ENCODE measurements at regions of chr12 and their contacts with region 1.

Region 1: GRCh38 chr12:12356886-12357718 is at the start of gene BORCS5:
- DNase-seq: peak; percentile 96 to 99 (median 98)
- ATAC-seq: peak; percentile 85
- H3K4me3 ChIP-seq: peak within 1 kb of the TSS; percentile 87
- H3K4me3 Mint-ChIP-seq: peak within 1 kb of the TSS; percentile 94
- H3K27ac ChIP-seq: peak within 1 kb of the TSS; percentile 86 to 93
- H3K27ac Mint-ChIP-seq: peak within 1 kb of the TSS; percentile 97
- H3K4me1 ChIP-seq: peaks cover 41% of the 10 kb centered on the region
- H3K4me1 Mint-ChIP-seq: peaks cover 64% of the 10 kb centered on the region
- H3K27me3 ChIP-seq: no peaks in the 10 kb centered on the region
- H3K27me3 Mint-ChIP-seq: no peaks in the 10 kb centered on the region
- CTCF ChIP-seq: peak; percentile 30
- total RNA-seq, gene BORCS5: 36.4 to 39.3 TPM

Region 2: DNA sequence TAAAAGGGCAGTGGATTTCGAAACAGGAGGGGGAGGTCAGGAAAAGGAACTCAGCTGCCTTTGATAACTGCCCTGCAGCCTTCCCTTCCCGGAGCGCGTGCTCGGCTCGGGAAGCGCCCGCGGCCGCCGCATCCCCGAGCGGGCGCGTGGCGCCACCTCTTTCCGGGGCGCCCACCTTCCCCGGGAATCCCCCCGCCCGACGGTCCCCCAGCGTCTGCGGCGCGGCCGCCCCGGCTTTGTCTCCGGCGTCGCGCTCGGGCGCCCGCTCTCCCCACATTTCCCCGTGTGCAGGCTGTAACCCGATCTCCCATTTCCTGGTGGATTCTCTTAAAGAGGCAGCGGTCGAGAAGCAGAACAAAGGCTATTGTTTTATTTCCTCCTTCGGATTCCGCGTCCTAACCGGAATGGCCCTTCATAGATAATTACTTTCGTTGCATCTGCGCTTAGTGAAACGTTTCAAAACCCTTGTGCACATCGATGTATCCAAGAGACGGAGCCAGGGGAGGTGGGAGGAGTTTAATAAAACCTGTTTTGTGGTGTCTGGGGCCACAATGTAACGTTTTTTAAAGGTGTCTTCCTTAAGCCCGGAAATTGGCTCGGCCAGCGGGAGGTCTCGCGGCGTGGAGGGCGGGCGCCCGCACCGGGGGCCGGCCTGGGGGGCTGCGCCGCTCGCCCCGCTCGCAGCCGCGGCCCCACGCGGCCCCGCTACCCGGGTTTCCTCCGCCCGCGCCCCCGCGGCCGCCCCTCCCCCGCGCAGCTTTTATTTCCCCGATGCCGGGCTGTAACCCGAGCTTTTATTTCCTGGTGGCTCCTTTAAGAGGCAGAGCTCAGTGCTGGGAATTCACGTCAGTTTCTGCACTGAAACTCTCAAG is 708.0 kb before region 1 on chr12 and contains the start of gene ETV6:
- CTCF ChIA-PET with region 1: no interaction called
- POLR2A ChIA-PET with region 1: interaction called, 7 read pairs
- intact Hi-C with region 1: loop called in 1 of 2 experiments (anchors 10 kb)
- DNase-seq: peak; percentile 41 to 88 (median 62)
- ATAC-seq: peak; percentile 62
- H3K4me3 ChIP-seq: peak within 1 kb of the TSS; percentile 97
- H3K4me3 Mint-ChIP-seq: peak within 1 kb of the TSS; percentile 98
- H3K27ac ChIP-seq: peak within 1 kb of the TSS; percentile 68 to 81
- H3K27ac Mint-ChIP-seq: peak within 1 kb of the TSS; percentile 92
- H3K4me1 ChIP-seq: peaks cover 26% of the 10 kb centered on the region
- H3K4me1 Mint-ChIP-seq: peaks cover 38% of the 10 kb centered on the region
- H3K27me3 ChIP-seq: no peaks in the 10 kb centered on the region
- H3K27me3 Mint-ChIP-seq: no peaks in the 10 kb centered on the region
- CTCF ChIP-seq: no peak
- total RNA-seq, gene ETV6: 28.5 to 30.2 TPM

Region 3: DNA sequence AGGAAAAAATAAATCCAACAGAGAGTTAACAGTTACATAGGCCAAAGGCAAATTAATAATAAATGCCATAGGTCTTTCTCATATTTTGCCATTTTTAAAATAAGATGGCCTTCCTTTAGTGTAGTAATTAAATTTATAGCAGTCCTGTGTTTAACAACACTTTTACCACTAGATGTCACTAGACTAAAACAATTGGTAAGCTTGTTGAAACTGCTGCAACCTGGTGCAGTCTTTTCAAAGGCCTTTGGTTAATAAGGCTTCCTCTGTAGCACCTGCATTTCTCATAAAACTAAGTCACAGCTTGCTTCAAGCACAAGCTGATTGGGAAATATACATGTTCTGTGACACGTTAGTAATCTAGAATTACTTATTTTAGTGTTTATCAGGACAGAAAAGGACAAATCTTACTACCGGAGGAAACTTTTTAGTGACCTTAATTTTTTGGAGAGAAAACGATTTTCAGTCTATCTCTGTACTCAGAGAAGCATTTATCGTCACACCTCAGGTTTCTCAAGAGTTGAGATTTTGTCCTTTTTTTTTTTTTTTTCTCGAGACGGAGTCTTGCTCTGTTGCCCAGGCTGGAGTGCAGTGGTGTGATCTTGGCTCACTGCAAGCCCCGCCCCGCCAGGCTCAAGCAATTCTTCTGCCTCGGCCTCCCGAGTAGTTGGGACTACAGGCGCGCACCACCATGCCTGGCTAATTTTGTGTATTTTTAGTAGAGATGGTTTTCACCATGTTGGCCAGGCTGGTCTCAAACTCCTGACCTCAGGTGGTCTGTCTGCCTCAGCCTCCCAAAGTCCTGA is 19.7 kb after region 1 on chr12:
- CTCF ChIA-PET with region 1: interaction called, 7 read pairs
- POLR2A ChIA-PET with region 1: interaction called, 17 read pairs
- intact Hi-C with region 1: no loop called
- DNase-seq: peak in 6 of 14 experiments; percentile 15 to 88 (median 59)
- ATAC-seq: peak; percentile 47
- H3K4me3 ChIP-seq: no peak overlapping the region
- H3K4me3 Mint-ChIP-seq: no peak overlapping the region
- H3K27ac ChIP-seq: no peak overlapping the region
- H3K27ac Mint-ChIP-seq: peak overlapping the region; percentile 62
- H3K4me1 ChIP-seq: peaks cover 20% of the 10 kb centered on the region
- H3K4me1 Mint-ChIP-seq: peaks cover 49% of the 10 kb centered on the region
- H3K27me3 ChIP-seq: no peaks in the 10 kb centered on the region
- H3K27me3 Mint-ChIP-seq: no peaks in the 10 kb centered on the region
- CTCF ChIP-seq: peak; percentile 83

Region 4: DNA sequence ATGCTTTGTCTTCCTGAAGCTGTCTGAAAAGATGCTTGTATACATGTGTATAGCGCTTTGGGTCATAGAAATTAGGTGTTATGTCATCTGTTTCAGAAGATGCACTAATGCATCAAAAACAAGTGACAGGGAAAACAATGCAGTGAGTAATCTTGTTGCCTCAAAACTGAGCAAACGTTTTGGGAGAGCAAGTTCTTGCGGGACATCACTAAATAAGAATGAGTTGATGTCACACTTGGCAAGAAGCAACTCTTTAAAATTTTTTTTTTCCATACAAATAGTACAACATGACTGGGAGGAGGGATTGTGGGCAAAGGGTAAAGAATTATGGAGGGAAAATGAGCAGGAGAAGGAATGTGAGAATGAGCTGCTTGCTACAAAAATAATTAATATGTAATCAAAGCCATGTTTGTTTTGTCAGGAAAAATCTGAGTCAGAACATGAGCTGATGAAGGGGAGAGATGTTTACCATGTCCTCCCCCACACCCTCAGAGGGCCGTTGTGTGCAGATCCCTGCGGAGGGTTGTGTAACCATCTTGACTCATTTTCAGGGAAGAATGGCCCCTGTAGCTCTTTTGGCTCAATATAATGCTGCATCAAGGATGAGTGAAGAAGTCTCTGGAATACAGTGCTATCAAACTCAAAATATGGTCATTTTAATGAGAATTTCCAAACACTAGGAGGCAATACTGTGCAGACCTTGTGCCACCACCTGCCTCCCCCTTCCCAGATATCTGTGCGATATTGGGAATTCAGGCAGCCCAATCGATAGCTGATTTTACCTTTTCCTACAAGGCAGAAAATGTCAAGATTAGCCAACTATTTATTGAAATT is 41.1 kb after region 1 on chr12:
- CTCF ChIA-PET with region 1: no interaction called
- POLR2A ChIA-PET with region 1: no interaction called
- intact Hi-C with region 1: no loop called
- DNase-seq: no peak
- ATAC-seq: no peak
- H3K4me3 ChIP-seq: no peak overlapping the region
- H3K4me3 Mint-ChIP-seq: no peak overlapping the region
- H3K27ac ChIP-seq: no peak overlapping the region
- H3K27ac Mint-ChIP-seq: no peak overlapping the region
- H3K4me1 ChIP-seq: peaks cover 6% of the 10 kb centered on the region
- H3K4me1 Mint-ChIP-seq: peaks cover 60% of the 10 kb centered on the region
- H3K27me3 ChIP-seq: no peaks in the 10 kb centered on the region
- H3K27me3 Mint-ChIP-seq: no peaks in the 10 kb centered on the region
- CTCF ChIP-seq: no peak

Region 5: GRCh38 chr12:12415886-12416285 is 58.8 kb after region 1 on chr12:
- CTCF ChIA-PET with region 1: no interaction called
- POLR2A ChIA-PET with region 1: no interaction called
- intact Hi-C with region 1: no loop called
- DNase-seq: no peak
- ATAC-seq: no peak
- H3K4me3 ChIP-seq: no peak overlapping the region
- H3K4me3 Mint-ChIP-seq: no peak overlapping the region
- H3K27ac ChIP-seq: no peak overlapping the region
- H3K27ac Mint-ChIP-seq: no peak overlapping the region
- H3K4me1 ChIP-seq: no peaks in the 10 kb centered on the region
- H3K4me1 Mint-ChIP-seq: peaks cover 36% of the 10 kb centered on the region
- H3K27me3 ChIP-seq: no peaks in the 10 kb centered on the region
- H3K27me3 Mint-ChIP-seq: no peaks in the 10 kb centered on the region
- CTCF ChIP-seq: no peak

Region 6: GRCh38 chr12:12474931-12475795 is 118.1 kb after region 1 on chr12:
- CTCF ChIA-PET with region 1: no interaction called
- POLR2A ChIA-PET with region 1: interaction called, 18 read pairs
- intact Hi-C with region 1: no loop called
- DNase-seq: peak in 12 of 14 experiments; percentile 18 to 89 (median 44)
- ATAC-seq: peak; percentile 84
- H3K4me3 ChIP-seq: peak overlapping the region; percentile 38
- H3K4me3 Mint-ChIP-seq: peak overlapping the region; percentile 59
- H3K27ac ChIP-seq: peak overlapping the region; percentile 55 to 91
- H3K27ac Mint-ChIP-seq: peak overlapping the region; percentile 93
- H3K4me1 ChIP-seq: peaks cover 50% of the 10 kb centered on the region
- H3K4me1 Mint-ChIP-seq: peaks cover 57% of the 10 kb centered on the region
- H3K27me3 ChIP-seq: no peaks in the 10 kb centered on the region
- H3K27me3 Mint-ChIP-seq: no peaks in the 10 kb centered on the region
- CTCF ChIP-seq: no peak

Region 7: DNA sequence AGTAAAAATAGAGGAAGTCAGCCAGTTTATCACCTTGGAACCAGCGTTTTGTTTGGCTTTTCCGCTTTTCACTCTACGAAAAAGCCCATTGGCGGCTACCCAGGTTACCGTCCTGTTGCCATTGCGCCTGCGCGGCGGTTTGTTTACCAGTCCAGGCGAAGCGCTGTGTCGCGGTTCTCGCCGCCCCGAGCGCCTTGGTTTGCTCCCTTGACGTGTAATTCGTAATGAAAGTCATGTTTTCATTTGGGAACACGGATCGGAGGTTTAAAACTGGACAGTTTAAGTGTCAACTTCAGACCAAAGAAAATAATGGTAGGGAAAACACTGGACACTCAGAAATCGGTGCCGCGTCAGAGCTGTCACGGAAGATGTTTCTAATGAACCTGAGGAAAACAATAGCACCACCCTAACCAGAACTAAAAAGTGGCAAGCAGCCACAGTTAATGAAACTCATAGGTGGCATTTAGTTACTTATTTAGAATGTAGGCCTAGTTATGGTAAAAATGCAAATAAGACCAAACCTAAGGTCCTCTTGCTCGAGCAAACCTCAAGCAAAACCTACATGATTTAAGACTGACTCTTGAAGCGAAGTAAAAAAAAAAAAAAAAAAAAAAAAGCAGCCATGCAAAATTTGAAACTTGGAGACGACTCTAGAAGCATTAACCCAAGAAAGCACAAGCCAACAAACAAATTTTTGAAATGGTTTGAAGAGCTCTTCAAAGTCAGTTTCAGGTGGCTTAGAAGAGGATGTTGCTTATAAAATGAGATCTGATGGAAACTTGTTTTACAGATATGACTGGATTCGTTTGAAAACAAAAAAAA is 339.7 kb after region 1 on chr12:
- CTCF ChIA-PET with region 1: interaction called, 6 read pairs
- POLR2A ChIA-PET with region 1: interaction called, 30 read pairs
- intact Hi-C with region 1: no loop called
- DNase-seq: peak; percentile 90 to 97 (median 92)
- ATAC-seq: peak; percentile 83
- H3K4me3 ChIP-seq: peak overlapping the region; percentile 61
- H3K4me3 Mint-ChIP-seq: peak overlapping the region; percentile 94
- H3K27ac ChIP-seq: peak overlapping the region; percentile 96 to 97
- H3K27ac Mint-ChIP-seq: peak overlapping the region; percentile 100
- H3K4me1 ChIP-seq: peaks cover 7% of the 10 kb centered on the region
- H3K4me1 Mint-ChIP-seq: peaks cover 41% of the 10 kb centered on the region
- H3K27me3 ChIP-seq: no peaks in the 10 kb centered on the region
- H3K27me3 Mint-ChIP-seq: no peaks in the 10 kb centered on the region
- CTCF ChIP-seq: no peak

Region 8: DNA sequence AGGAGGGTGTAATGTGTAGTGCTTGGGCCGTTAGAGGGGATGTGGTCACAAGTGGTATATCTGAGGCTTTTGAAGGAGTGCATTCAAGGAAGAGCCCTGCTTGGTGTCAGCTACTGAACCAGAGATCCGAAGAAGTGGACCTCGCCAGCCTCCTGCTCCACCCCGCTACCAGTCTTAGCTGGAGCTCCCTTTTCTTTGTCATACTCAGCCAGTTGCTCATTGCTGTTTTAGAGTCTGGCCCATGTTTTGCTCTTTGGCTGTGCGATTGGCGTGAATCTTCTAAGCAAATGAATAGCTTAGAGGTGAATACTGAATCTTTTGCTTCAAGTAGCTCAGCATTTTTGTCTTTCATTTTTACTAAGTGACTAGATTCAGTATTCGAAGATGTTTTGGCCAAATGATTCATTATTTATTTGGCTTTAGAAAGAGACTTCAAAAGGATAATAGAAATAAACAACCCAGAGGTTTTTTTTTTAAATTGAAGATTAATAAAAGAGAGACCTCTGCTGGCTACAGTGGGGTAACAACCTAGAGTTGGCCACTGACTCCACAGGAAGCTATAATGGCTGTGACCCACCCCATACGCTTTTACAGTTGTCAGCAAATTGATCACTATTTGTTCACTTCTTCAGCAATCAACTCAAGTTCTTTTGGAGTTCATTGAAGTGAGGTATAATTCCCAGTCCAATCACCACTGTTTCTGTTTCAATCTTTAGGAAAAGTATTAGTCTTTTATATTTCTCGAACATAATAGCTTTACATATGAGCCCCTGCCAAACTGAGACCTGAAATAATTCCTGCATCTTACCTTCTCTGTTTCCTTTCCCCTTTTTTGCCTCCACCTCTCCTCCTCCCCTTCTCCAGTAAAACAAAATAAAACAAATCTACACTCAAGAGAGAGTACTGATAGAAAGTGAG is 379.9 kb after region 1 on chr12:
- CTCF ChIA-PET with region 1: interaction called, 13 read pairs
- POLR2A ChIA-PET with region 1: interaction called, 62 read pairs
- intact Hi-C with region 1: no loop called
- DNase-seq: peak in 13 of 14 experiments; percentile 15 to 87 (median 33)
- ATAC-seq: peak; percentile 82
- H3K4me3 ChIP-seq: peak overlapping the region; percentile 34
- H3K4me3 Mint-ChIP-seq: peak overlapping the region; percentile 58
- H3K27ac ChIP-seq: peak overlapping the region; percentile 34 to 40
- H3K27ac Mint-ChIP-seq: peak overlapping the region; percentile 85
- H3K4me1 ChIP-seq: peaks cover 30% of the 10 kb centered on the region
- H3K4me1 Mint-ChIP-seq: peaks cover 41% of the 10 kb centered on the region
- H3K27me3 ChIP-seq: no peaks in the 10 kb centered on the region
- H3K27me3 Mint-ChIP-seq: no peaks in the 10 kb centered on the region
- CTCF ChIP-seq: peak; percentile 71

Region 9: GRCh38 chr12:13100882-13101769 is 744.0 kb after region 1 on chr12:
- CTCF ChIA-PET with region 1: no interaction called
- POLR2A ChIA-PET with region 1: no interaction called
- intact Hi-C with region 1: loop called in 1 of 2 experiments (anchors 10 kb)
- DNase-seq: peak; percentile 87 to 98 (median 92)
- ATAC-seq: peak; percentile 87
- H3K4me3 ChIP-seq: peak overlapping the region; percentile 64
- H3K4me3 Mint-ChIP-seq: peak overlapping the region; percentile 87
- H3K27ac ChIP-seq: peak overlapping the region; percentile 93 to 94
- H3K27ac Mint-ChIP-seq: peak overlapping the region; percentile 94
- H3K4me1 ChIP-seq: peaks cover 38% of the 10 kb centered on the region
- H3K4me1 Mint-ChIP-seq: peaks cover 53% of the 10 kb centered on the region
- H3K27me3 ChIP-seq: no peaks in the 10 kb centered on the region
- H3K27me3 Mint-ChIP-seq: no peaks in the 10 kb centered on the region
- CTCF ChIP-seq: no peak

Measured in CD4-positive, alpha-beta T cell (primary cell).